ENCODE measurements at regions of chr10 and their contacts with region 1.

Region 1: DNA sequence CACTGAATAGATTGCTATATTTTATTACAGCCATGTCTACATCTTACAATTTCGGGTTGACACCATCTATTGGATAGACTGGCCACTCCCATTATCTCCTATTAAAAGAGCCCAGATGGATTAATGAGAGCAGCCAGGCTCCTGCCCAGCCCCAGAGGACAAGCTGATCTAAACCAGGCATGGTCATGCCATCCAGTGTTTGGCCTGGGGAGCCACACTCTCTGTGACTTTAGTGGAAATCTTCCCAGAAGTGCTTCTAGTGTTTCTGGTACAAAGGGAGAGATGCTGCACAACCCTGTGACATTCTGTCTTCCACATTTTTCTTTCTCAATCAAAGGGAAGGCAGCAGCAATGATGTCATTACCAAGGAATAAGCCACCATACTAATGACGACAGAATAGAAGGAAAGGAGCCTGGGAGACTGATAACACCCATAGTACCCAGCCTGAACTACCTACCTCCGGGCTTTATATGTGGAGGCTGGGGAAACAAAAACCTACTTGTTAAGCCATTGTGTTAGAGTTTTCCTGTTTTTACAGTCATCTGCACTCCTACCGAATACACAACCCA is 5.0 kb downstream of the NEBL start:
- DNase-seq: no peak
- ATAC-seq: no peak
- H3K4me3 ChIP-seq: no peak overlapping the region
- H3K27ac ChIP-seq: no peak overlapping the region
- H3K4me1 ChIP-seq: no peaks in the 10 kb centered on the region; the same call in 1 of the 2 replicates
- H3K27me3 ChIP-seq: no peaks in the 10 kb centered on the region
- CTCF ChIP-seq: no peak

Region 2: GRCh38 chr10:20247891-20248708 is 644.0 kb before region 1 on chr10:
- CTCF ChIA-PET with region 1: no interaction called
- POLR2A ChIA-PET with region 1: no interaction called
- in situ Hi-C with region 1: no loop called
- intact Hi-C with region 1: no loop called
- DNase-seq: no peak
- ATAC-seq: no peak
- H3K4me3 ChIP-seq: no peak overlapping the region
- H3K27ac ChIP-seq: no peak overlapping the region
- H3K4me1 ChIP-seq: no peaks in the 10 kb centered on the region
- H3K27me3 ChIP-seq: no peaks in the 10 kb centered on the region
- CTCF ChIP-seq: no peak

Region 3: GRCh38 chr10:20313665-20314064 is 578.4 kb before region 1 on chr10:
- CTCF ChIA-PET with region 1: no interaction called
- POLR2A ChIA-PET with region 1: no interaction called
- in situ Hi-C with region 1: no loop called
- intact Hi-C with region 1: no loop called
- DNase-seq: no peak
- ATAC-seq: no peak
- H3K4me3 ChIP-seq: no peak overlapping the region
- H3K27ac ChIP-seq: no peak overlapping the region
- H3K4me1 ChIP-seq: no peaks in the 10 kb centered on the region
- H3K27me3 ChIP-seq: no peaks in the 10 kb centered on the region
- CTCF ChIP-seq: no peak

Region 4: DNA sequence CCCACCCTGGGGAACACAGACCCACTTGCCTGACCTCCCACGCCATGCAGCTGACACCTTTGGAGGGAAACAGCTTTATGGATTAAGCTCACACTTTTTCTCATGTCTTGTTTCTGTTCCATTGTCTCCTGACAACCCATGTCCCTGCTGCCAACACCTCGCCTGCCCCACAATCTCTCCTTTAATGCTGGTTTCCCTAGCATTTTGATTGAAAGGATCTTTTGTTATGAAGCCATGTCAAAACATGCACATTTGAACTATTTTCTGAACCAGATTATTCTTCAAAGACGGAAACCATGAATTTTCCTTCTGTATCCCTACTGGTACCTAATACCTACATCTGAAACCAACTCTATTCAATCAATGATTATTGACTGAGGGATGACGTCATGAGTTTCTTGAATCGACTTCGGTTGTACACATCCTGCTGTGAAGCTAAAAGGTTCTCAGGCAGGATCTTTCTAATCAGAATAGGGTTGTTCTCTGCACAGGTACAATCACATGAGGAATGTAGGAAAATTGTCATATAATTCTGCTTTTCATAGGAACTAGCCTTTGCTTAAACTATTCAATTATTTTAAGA is 111.2 kb after region 1 on chr10:
- CTCF ChIA-PET with region 1: interaction called, 11 read pairs
- POLR2A ChIA-PET with region 1: no interaction called
- in situ Hi-C with region 1: no loop called
- intact Hi-C with region 1: no loop called
- DNase-seq: no peak
- ATAC-seq: no peak
- H3K4me3 ChIP-seq: no peak overlapping the region
- H3K27ac ChIP-seq: no peak overlapping the region
- H3K4me1 ChIP-seq: peaks cover 12% of the 10 kb centered on the region; the same call in 1 of the 2 replicates
- H3K27me3 ChIP-seq: no peaks in the 10 kb centered on the region
- CTCF ChIP-seq: no peak

Region 5: GRCh38 chr10:21318540-21319167 is 426.6 kb after region 1 on chr10:
- CTCF ChIA-PET with region 1: no interaction called
- POLR2A ChIA-PET with region 1: no interaction called
- in situ Hi-C with region 1: no loop called
- intact Hi-C with region 1: no loop called
- DNase-seq: no peak
- ATAC-seq: peak; percentile 14
- H3K4me3 ChIP-seq: no peak overlapping the region
- H3K27ac ChIP-seq: peak overlapping the region; percentile 99
- H3K4me1 ChIP-seq: peaks cover 42% of the 10 kb centered on the region
- H3K27me3 ChIP-seq: no peaks in the 10 kb centered on the region
- CTCF ChIP-seq: no peak

Measured in Panc1 (cell line).